HAP-1 (cell line): ENCODE measurements at regions of chr11 and their contacts with region 1.

Region 1: GRCh38 chr11:30917859-30918478 is 331.8 kb upstream of the MPPED2 start:
- DNase-seq: peak; percentile 42 to 54
- H3K4me3 ChIP-seq: no peak overlapping the region
- H3K4me1 ChIP-seq: no peaks in the 10 kb centered on the region
- H3K27me3 ChIP-seq: peaks cover 16% of the 10 kb centered on the region

Region 2: DNA sequence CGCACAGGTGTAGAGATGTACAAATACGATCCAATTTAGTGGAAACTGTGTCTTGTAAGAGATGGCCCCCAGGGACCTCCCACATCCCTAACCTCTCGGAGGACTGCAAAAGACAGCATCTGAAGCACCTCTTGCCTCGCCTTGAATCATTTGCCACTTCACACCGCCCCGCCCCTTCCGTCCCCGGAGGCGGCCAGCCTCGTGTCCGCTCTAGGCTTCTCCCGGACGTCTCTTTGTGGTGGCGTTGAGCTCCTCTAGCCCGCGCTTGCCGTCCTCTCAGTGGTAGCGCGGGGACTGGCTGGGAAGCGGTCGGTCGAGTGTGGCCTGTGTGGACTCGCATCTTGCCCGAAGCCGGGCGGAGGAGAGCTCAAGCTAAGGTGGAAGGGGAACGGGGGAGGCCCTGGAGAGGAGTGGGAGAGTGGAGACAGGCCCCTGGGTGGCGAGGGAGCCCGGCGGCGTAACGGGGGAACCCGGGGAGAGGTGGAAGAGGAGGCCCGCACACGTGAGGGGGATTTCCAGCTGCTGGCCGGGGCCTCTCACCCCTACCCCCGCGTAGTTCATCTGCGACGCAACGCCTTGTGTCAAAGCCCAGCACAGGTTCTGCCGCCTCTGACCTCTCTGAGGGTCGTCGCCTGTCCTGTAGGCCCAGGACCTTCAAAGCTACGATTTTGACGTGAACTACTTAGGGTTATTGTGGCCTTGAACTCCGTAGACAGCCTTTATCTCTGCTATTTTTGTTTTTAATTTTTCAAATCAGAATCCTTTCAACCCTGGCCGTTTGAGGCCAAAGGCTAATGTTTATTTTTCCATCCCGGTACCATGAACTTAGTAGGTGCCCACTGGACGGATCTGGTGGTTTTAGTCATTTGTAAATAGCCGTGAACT is 594.9 kb before region 1 on chr11 and contains the start of gene ARL14EP:
- in situ Hi-C with region 1: loop called (anchors 10 kb)
- DNase-seq: peak; percentile 93 to 96
- H3K4me3 ChIP-seq: peak within 1 kb of the TSS; percentile 74
- H3K4me1 ChIP-seq: peaks cover 9% of the 10 kb centered on the region
- H3K27me3 ChIP-seq: no peaks in the 10 kb centered on the region

Region 3: GRCh38 chr11:31069447-31070205 is 151.7 kb after region 1 on chr11:
- in situ Hi-C with region 1: no loop called
- DNase-seq: no peak
- H3K4me3 ChIP-seq: no peak overlapping the region
- H3K4me1 ChIP-seq: no peaks in the 10 kb centered on the region
- H3K27me3 ChIP-seq: no peaks in the 10 kb centered on the region; the same call in 1 of the 2 replicates